Activated naive CD4-positive, alpha-beta T cell treated with anti-CD3 and anti-CD28 coated beads for 36 hours (primary cell): ENCODE measurements at regions of chr12 and their contacts with region 1.

Region 1: GRCh38 chr12:109573029-109573913 is at the starts of genes MMAB and MVK:
- DNase-seq: peak; percentile 100
- H3K4me3 Mint-ChIP-seq: peak within 1 kb of the TSS; percentile 92
- H3K27ac Mint-ChIP-seq: peak within 1 kb of the TSS; percentile 90
- H3K4me1 Mint-ChIP-seq: peaks cover 23% of the 10 kb centered on the region
- H3K27me3 Mint-ChIP-seq: no peaks in the 10 kb centered on the region
- total RNA-seq, gene MMAB: 43.8 to 44.9 TPM
- total RNA-seq, gene MVK: 19.8 to 20.2 TPM

Region 2: GRCh38 chr12:108856428-108857157 is 716.7 kb before region 1 on chr12:
- CTCF ChIA-PET with region 1: no interaction called
- intact Hi-C with region 1: loop called (anchors 2 kb)
- DNase-seq: peak; percentile 74
- H3K4me3 Mint-ChIP-seq: peak overlapping the region; percentile 92
- H3K27ac Mint-ChIP-seq: peak overlapping the region; percentile 75
- H3K4me1 Mint-ChIP-seq: peaks cover 40% of the 10 kb centered on the region
- H3K27me3 Mint-ChIP-seq: no peaks in the 10 kb centered on the region

Region 3: DNA sequence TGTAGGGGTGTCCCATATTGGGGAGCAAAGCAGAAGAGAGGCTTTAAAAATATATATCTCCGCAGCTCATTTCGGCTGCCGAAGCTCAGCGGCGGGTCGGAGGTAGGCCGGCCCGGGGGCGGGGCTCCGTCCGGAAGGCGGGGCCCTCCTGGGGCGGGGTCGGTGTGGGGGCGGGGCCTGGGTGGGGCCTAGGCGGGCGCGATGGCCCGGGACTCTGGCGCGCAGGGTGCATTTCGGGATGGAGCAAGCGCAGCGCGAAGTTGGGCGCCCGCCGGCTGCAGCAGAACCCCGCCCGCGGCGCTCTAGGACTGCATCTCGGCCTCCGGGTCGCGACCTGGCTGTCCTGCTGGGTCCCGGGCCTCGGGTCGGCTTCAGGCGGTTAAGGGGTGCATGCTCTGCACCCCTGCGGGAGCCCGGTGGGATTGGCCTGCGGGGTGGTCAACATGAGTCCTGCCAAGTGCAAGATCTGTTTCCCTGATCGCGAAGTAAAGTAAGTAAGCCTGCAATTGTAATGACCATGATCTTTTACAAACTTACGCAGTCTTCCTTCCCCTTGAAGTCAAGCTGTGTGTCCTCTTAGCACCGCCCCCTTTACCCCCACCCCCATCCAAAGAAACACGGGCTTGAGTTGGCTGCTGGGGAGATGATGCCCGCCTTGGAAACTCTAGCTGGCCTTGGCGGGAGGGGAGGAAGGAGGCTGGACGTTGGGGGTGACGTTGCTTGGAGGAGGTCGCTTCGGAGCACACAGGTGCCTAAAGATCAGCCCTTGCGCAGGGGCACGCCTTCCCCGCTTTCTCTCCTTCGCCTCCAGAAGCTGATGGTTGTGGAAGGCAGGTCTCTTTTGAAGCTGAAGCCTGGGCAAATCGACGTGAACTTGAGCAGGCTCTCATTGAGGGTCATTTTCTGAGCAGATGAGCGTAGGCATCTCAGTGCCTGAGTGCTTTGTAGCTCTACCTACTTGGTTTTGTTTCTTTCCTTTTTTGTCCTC is 418.5 kb before region 1 on chr12:
- CTCF ChIA-PET with region 1: no interaction called
- intact Hi-C with region 1: loop called (anchors 5 kb)
- DNase-seq: peak; percentile 85
- H3K4me3 Mint-ChIP-seq: peak overlapping the region; percentile 90
- H3K27ac Mint-ChIP-seq: peak overlapping the region; percentile 81
- H3K4me1 Mint-ChIP-seq: peaks cover 17% of the 10 kb centered on the region
- H3K27me3 Mint-ChIP-seq: no peaks in the 10 kb centered on the region

Region 4: DNA sequence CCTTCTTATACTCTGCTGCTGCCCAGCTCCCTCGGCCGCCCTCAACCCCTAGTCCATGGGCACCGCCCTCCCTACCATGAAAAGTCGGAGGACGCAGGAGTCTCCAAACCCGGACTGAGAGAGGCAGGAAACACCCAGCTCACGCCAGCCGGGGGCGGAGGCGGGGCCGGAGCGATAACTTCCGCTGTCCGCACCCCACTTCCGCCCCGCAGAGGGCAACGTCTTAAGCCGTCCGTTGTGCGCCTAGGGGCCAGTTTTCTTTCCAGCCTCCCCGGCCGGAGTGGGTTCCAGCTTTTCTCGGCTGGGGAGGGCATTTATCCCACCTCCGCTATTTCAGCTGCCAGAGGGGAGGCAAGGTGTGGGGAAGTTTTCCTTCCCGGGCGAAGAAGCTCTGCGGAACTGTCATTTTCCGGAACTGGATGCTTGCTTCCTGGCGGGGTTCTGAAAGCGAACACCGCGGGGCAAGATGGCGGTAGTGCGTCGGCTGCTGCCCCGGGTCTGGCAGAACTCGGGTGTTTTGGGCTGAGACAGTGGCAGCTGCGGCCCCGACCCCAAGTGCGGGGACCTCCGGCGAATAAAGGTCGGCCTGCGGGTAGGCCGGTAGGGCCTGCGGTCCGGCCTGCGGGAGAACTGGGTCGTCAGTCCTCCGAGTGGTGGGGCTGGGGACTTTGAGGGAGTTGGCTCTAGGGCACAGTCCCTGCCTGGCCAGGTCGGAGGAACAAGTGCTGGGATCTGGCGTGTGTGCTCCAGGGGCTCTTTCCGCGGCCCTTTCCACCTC is 95.9 kb before region 1 on chr12 and contains the starts of genes KCTD10 and UBE3B:
- CTCF ChIA-PET with region 1: no interaction called
- intact Hi-C with region 1: loop called (anchors 1 kb)
- DNase-seq: peak; percentile 87
- H3K4me3 Mint-ChIP-seq: peak within 1 kb of the TSS; percentile 97
- H3K27ac Mint-ChIP-seq: peak within 1 kb of the TSS; percentile 98
- H3K4me1 Mint-ChIP-seq: peaks cover 49% of the 10 kb centered on the region
- H3K27me3 Mint-ChIP-seq: no peaks in the 10 kb centered on the region
- total RNA-seq, gene KCTD10: 31.1 to 33.4 TPM
- total RNA-seq, gene UBE3B: 26.2 to 26.6 TPM

Region 5: GRCh38 chr12:109713187-109713984 is 140.1 kb after region 1 on chr12 and contains the start of gene FAM222A:
- CTCF ChIA-PET with region 1: interaction called, 3 read pairs
- intact Hi-C with region 1: loop called (anchors 1 kb)
- DNase-seq: peak; percentile 93
- H3K4me3 Mint-ChIP-seq: peak within 1 kb of the TSS; percentile 55
- H3K27ac Mint-ChIP-seq: no peak within 1 kb of the TSS
- H3K4me1 Mint-ChIP-seq: peaks cover 2% of the 10 kb centered on the region
- H3K27me3 Mint-ChIP-seq: peaks cover 35% of the 10 kb centered on the region
- total RNA-seq, gene FAM222A: 0.20 to 0.38 TPM